Caco-2 (cell line): ENCODE measurements at regions of chr10 and their contacts with region 1.

Region 1: DNA sequence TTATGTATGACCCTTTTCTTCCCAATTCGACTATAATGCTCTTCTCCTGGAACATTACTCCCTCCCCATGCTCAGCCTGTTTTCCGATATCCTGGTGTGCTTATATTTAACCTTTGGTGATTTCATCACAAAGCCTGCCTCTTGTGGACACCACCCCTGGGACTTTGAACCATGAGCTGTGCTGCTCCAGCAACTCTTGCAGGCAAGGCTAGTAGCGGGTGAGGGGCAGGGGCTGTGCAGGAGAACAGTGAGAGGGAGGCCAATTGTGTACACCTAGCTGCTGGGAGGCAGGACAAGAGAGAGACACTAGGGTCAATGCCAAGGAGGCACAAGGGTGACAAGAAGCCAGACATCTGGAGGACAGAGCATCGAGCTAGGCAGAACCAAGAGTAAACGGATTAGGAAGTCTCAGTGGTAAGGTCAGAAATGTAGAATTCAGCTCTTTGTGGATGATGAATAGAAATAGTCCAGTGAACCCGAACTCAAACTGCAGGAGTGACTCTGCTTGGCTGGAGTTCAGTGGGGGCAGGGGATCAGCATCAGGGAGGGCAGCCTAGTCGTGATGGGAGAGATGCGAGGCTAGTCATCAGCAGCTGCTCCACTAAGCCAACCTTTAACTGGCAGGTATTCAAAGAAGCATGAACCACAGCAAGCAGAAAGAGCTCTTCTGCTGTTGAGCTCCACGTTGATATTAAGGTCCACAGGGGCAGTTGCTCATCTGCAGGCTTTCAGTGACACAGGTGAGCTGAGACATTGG is 31.0 kb upstream of the MKI67 start:
- DNase-seq: peak; percentile 74 to 78
- H3K4me3 ChIP-seq: no peak overlapping the region
- H3K4me3 Mint-ChIP-seq: peak overlapping the region; percentile 2
- H3K27ac Mint-ChIP-seq: peak overlapping the region; percentile 16
- H3K4me1 ChIP-seq: peaks cover 19% of the 10 kb centered on the region
- H3K4me1 Mint-ChIP-seq: peaks cover 22% of the 10 kb centered on the region
- H3K27me3 ChIP-seq: no peaks in the 10 kb centered on the region
- H3K27me3 Mint-ChIP-seq: no peaks in the 10 kb centered on the region
- CTCF ChIP-seq: peak in 1 of 2 experiments; percentile 9

Region 2: GRCh38 chr10:128095027-128095752 is 62.0 kb before region 1 on chr10:
- CTCF ChIA-PET with region 1: no interaction called
- POLR2A ChIA-PET with region 1: no interaction called
- intact Hi-C with region 1: no loop called
- DNase-seq: peak; percentile 62 to 66
- H3K4me3 ChIP-seq: no peak overlapping the region
- H3K4me3 Mint-ChIP-seq: no peak overlapping the region
- H3K27ac Mint-ChIP-seq: no peak overlapping the region
- H3K4me1 ChIP-seq: peaks cover 12% of the 10 kb centered on the region
- H3K4me1 Mint-ChIP-seq: peaks cover 28% of the 10 kb centered on the region
- H3K27me3 ChIP-seq: no peaks in the 10 kb centered on the region
- H3K27me3 Mint-ChIP-seq: no peaks in the 10 kb centered on the region
- CTCF ChIP-seq: peak in 1 of 2 experiments; percentile 11

Region 3: DNA sequence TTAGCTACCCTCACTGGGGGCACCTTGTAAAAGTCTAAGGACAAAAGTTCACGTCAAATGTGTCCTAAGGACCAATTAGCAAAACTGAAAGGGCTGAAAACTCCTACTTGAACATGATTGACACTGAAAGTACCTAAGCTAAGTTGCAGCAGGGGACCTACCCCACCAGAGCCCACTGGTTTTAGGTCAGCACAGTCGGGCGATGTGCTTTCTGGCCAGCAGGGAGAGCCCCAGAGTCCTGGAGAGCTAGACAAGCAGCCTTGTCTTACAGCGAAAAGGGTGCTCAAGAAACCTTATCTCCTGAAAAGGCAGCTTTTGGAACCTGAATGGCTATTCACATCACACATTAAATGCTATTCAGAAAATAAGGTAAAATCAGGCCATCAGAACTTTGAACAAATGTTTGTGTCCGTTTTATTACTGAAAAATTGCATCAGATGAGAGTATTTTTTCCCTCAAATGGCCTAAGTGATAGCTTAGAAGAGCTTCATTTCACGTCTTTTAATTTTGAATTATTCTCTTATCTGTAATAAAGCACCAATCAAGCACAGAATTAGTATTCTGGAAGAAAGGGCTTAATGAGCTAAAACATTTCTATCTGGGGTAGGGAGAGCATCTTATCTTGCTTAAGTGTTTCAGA is 21.3 kb after region 1 on chr10:
- CTCF ChIA-PET with region 1: no interaction called
- POLR2A ChIA-PET with region 1: no interaction called
- intact Hi-C with region 1: loop called (anchors 2 kb)
- DNase-seq: peak; percentile 45 to 47
- H3K4me3 ChIP-seq: no peak overlapping the region
- H3K4me3 Mint-ChIP-seq: no peak overlapping the region
- H3K27ac Mint-ChIP-seq: no peak overlapping the region
- H3K4me1 ChIP-seq: peaks cover 4% of the 10 kb centered on the region; the same call in 1 of the 2 replicates
- H3K4me1 Mint-ChIP-seq: peaks cover 3% of the 10 kb centered on the region
- H3K27me3 ChIP-seq: no peaks in the 10 kb centered on the region
- H3K27me3 Mint-ChIP-seq: peaks cover 11% of the 10 kb centered on the region
- CTCF ChIP-seq: peak; percentile 51 to 53